CD4-positive, alpha-beta memory T cell (primary cell): ENCODE measurements at regions of chr15 and their contacts with region 1.

Region 1: DNA sequence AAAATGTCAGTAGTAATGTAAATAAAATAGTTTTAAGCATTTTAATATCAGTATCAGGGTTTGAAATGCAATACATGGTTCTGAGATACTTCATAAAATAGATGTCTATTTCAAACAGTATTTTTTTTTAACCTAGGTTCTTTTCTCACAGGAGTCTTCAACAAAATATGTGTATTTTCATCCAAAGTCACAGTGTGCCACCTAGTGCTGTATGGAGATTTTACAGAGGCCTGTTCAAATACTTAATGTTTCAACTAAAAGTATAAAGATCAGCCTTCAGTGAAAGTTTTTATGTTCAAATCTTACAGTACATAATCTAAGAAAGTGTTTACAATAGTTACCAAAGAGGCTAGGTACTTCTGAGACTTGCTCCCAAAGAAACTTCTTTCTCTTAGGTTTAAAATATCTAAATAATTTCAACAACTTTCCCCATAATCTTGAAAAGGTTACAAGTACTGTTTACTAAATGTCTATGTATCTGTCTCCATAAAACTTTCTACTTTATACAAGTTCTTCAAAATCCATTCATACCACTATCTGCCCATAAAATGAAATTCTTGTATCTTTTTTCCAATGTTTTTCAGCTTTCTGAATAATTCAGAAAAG is 38.3 kb downstream of the SCAPER start:
- DNase-seq: peak in 4 of 5 donors; percentile 2 to 15 (median 8)
- H3K4me3 ChIP-seq: no peak overlapping the region
- H3K4me3 Mint-ChIP-seq: no peak overlapping the region
- H3K27ac ChIP-seq: no peak overlapping the region
- H3K27ac Mint-ChIP-seq: peak overlapping the region in 1 of 7 donors; percentile 69
- H3K4me1 ChIP-seq: peaks cover 7% of the 10 kb centered on the region
- H3K4me1 Mint-ChIP-seq: peaks cover 20 to 29% (median 23%) of the 10 kb centered on the region in 4 donors
- H3K27me3 ChIP-seq: no peaks in the 10 kb centered on the region
- H3K27me3 Mint-ChIP-seq: no peaks in the 10 kb centered on the region

Region 2: DNA sequence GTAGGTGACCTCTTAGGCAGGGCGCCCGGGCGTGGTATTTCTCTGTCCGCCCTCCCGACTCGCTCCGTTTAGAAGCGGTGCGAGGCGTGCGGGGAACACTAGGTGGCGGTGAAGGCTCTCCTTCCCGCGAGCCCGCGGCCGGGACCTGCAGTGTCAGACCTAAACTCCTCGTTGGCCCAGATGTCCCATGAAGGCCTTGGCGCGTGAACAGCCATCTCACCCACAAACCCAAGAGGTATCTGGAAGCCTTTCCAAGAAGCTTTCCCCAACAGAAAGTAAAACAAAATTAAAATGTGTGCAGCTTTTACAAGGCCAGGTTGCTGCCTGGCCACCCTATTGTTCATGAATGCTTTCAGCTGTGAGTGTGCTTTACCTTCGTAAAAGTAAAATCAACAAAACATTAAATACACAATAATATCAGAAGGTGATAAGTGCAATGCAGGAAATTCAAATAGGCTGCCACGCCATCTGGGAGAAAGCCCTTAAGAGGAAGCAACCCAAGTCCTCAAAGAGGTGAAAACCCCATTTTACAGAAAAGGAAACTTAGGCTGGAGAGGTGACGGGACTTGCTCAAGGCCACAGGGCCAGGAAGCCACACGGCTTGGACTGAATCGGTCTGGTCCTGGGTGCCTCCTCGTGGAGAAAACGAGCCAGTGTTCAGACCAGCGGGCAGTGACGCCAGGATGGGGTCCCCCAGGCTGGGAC is 675.8 kb before region 1 on chr15:
- CTCF ChIA-PET with region 1: interaction called, 10 read pairs
- POLR2A ChIA-PET with region 1: no interaction called
- intact Hi-C with region 1: loop called (anchors 2 kb)
- DNase-seq: peak; percentile 49 to 58 (median 54)
- H3K4me3 ChIP-seq: peak overlapping the region in 1 of 2 donors; percentile 1
- H3K4me3 Mint-ChIP-seq: peak overlapping the region; percentile 35 to 74 (median 67)
- H3K27ac ChIP-seq: no peak overlapping the region
- H3K27ac Mint-ChIP-seq: peak overlapping the region in 3 of 7 donors; percentile 24 to 85 (median 44)
- H3K4me1 ChIP-seq: peaks cover 8% of the 10 kb centered on the region
- H3K4me1 Mint-ChIP-seq: peaks cover 8 to 14% (median 9%) of the 10 kb centered on the region in 4 donors
- H3K27me3 ChIP-seq: no peaks in the 10 kb centered on the region
- H3K27me3 Mint-ChIP-seq: peaks cover 10 to 18% of the 10 kb centered on the region in 2 donors

Region 3: DNA sequence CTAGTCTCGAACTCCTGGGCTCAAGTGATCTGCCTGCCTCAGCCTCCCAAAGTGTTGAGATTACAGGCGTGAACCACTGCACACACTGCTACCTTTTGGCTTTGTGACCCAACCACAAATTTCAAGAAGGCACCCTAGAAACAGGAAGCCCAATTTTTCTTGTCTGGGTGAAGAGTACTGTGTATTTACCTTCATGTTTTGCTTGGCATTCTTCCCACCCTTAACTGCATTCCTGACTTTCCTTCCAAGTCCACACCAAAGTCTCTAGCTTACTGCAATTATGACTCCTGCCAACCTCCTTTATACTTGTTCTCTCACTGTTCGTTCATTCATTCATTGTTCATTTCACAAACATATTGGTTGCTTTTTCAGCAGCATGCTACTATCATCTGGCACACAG is 649.8 kb before region 1 on chr15:
- CTCF ChIA-PET with region 1: no interaction called
- POLR2A ChIA-PET with region 1: no interaction called
- intact Hi-C with region 1: no loop called
- DNase-seq: no peak
- H3K4me3 ChIP-seq: no peak overlapping the region
- H3K4me3 Mint-ChIP-seq: no peak overlapping the region
- H3K27ac ChIP-seq: no peak overlapping the region
- H3K27ac Mint-ChIP-seq: peak overlapping the region in 1 of 7 donors; percentile 24
- H3K4me1 ChIP-seq: no peaks in the 10 kb centered on the region
- H3K4me1 Mint-ChIP-seq: peaks cover 0 to 5% (median 2%) of the 10 kb centered on the region in 4 donors
- H3K27me3 ChIP-seq: no peaks in the 10 kb centered on the region
- H3K27me3 Mint-ChIP-seq: no peaks in the 10 kb centered on the region

Region 4: DNA sequence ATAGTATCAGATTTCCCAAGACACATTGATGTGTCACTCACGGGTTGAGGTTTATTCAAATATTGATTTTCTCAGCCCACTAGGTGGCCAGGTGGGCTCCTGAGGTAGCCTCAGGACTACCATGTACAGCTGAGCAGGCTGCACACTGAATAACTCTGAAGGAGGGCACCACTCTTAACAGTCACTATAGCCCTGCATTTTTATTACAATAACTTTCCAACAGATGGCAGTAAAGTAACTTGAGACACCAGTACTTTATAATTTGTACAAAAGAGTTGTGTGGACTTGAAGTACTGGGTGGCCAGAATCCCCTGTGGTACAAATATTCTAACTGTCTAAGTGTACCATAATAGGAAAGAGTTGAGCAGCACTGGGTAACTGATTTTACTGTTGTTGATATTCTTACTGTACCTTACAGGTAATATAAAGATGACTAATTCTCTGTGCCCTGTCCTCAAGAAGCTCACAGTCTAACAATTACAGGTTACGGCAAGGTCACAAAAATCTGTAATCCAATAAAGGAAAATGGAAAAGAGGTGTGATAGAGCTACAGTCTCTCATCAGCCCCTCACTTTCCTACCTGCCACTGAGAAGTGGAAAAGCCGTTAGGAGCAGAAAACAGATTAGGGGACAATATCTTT is 631.5 kb before region 1 on chr15:
- CTCF ChIA-PET with region 1: interaction called, 3 read pairs
- POLR2A ChIA-PET with region 1: no interaction called
- intact Hi-C with region 1: loop called (anchors 10 kb)
- DNase-seq: peak in 4 of 5 donors; percentile 27 to 45 (median 33)
- H3K4me3 ChIP-seq: no peak overlapping the region
- H3K4me3 Mint-ChIP-seq: no peak overlapping the region
- H3K27ac ChIP-seq: no peak overlapping the region
- H3K27ac Mint-ChIP-seq: peak overlapping the region in 1 of 7 donors; percentile 36
- H3K4me1 ChIP-seq: no peaks in the 10 kb centered on the region
- H3K4me1 Mint-ChIP-seq: no peaks in the 10 kb centered on the region
- H3K27me3 ChIP-seq: no peaks in the 10 kb centered on the region
- H3K27me3 Mint-ChIP-seq: no peaks in the 10 kb centered on the region

Region 5: GRCh38 chr15:76987926-76988860 is 121.4 kb after region 1 on chr15:
- CTCF ChIA-PET with region 1: no interaction called
- POLR2A ChIA-PET with region 1: no interaction called
- intact Hi-C with region 1: no loop called
- DNase-seq: peak in 1 of 5 donors; percentile 10
- H3K4me3 ChIP-seq: peak overlapping the region in 1 of 2 donors; percentile 14
- H3K4me3 Mint-ChIP-seq: peak overlapping the region in 7 of 8 donors; percentile 52 to 86 (median 77)
- H3K27ac ChIP-seq: peak overlapping the region; percentile 27
- H3K27ac Mint-ChIP-seq: peak overlapping the region; percentile 38 to 92 (median 84)
- H3K4me1 ChIP-seq: peaks cover 33% of the 10 kb centered on the region
- H3K4me1 Mint-ChIP-seq: peaks cover 24 to 63% (median 31%) of the 10 kb centered on the region in 4 donors
- H3K27me3 ChIP-seq: no peaks in the 10 kb centered on the region
- H3K27me3 Mint-ChIP-seq: no peaks in the 10 kb centered on the region